Right ventricle myocardium inferior (tissue), 1 donor: ENCODE measurements at regions of chr6 and their contacts with region 1.

Region 1: GRCh38 chr6:147285087-147285855 is 81.1 kb downstream of the STXBP5 start:
- DNase-seq: no peak
- ATAC-seq: no peak

Region 2: GRCh38 chr6:146857180-146857979 is 427.9 kb before region 1 on chr6:
- intact Hi-C with region 1: loop called (anchors 1 kb)
- DNase-seq: peak; percentile 96
- ATAC-seq: peak; percentile 96

Region 3: GRCh38 chr6:147227770-147228320 is 57.4 kb before region 1 on chr6:
- intact Hi-C with region 1: no loop called
- DNase-seq: no peak
- ATAC-seq: no peak

Region 4: DNA sequence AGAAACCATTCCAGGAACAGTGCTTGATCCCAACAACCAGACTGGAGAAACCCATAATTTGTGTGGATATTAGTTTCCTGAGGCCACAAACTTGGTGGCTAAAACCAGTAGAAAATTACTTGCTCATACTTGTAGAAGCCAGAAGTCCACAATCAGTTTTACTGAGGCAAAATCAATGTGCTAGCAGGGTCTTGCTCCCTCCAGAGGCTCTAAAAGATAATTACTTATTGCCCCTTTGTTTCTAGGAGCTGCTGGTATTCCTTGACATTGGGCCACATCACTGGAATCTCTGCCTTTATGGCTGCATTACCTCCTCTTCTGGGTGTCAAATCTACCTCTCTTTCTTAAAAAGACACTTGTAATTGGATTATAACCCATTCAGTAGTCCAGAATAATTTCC is 81.0 kb after region 1 on chr6:
- intact Hi-C with region 1: no loop called
- DNase-seq: no peak
- ATAC-seq: no peak